Transverse colon (tissue), 4 donors: ENCODE measurements at regions of chr12 and their contacts with region 1.

Region 1: GRCh38 chr12:101830367-101831325 is at the start of gene GNPTAB:
- DNase-seq: peak; percentile 96
- H3K4me3 ChIP-seq: peak within 1 kb of the TSS; percentile 72 to 86 (median 80)
- H3K27ac ChIP-seq: peak within 1 kb of the TSS; percentile 90 to 92 (median 92)
- H3K4me1 ChIP-seq: peaks cover 4 to 37% (median 13%) of the 10 kb centered on the region in 4 donors
- H3K27me3 ChIP-seq: no peaks in the 10 kb centered on the region
- CTCF ChIP-seq: peak; percentile 70 to 85 (median 71)
- EP300 ChIP-seq: no peak
- POLR2A ChIP-seq: no peak
- total RNA-seq, gene GNPTAB: 24.1 to 83.0 (median 64.5) TPM

Region 2: DNA sequence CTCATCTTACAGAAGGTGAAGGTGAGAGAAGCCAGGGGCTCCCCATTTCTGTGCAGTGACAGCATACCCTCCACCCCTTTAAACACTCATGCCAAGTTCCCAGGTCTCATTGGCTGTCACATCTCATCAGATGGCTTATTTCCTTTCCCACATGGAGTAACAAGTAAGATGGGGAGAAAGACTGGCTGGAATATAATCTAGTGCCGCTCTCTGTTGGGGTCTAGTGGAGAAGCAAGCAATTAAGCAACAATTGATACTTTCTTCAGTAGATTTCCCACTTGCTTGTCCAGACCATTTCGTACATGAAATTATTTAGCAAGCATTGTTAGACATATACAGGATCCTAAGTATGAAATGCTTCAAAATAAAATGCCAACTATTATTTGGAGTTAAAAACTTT is 712.8 kb before region 1 on chr12:
- in situ Hi-C with region 1: no loop called
- intact Hi-C with region 1: no loop called
- DNase-seq: no peak
- H3K4me3 ChIP-seq: no peak overlapping the region
- H3K27ac ChIP-seq: no peak overlapping the region
- H3K4me1 ChIP-seq: no peaks in the 10 kb centered on the region
- H3K27me3 ChIP-seq: no peaks in the 10 kb centered on the region
- CTCF ChIP-seq: no peak
- EP300 ChIP-seq: no peak
- POLR2A ChIP-seq: no peak

Region 3: DNA sequence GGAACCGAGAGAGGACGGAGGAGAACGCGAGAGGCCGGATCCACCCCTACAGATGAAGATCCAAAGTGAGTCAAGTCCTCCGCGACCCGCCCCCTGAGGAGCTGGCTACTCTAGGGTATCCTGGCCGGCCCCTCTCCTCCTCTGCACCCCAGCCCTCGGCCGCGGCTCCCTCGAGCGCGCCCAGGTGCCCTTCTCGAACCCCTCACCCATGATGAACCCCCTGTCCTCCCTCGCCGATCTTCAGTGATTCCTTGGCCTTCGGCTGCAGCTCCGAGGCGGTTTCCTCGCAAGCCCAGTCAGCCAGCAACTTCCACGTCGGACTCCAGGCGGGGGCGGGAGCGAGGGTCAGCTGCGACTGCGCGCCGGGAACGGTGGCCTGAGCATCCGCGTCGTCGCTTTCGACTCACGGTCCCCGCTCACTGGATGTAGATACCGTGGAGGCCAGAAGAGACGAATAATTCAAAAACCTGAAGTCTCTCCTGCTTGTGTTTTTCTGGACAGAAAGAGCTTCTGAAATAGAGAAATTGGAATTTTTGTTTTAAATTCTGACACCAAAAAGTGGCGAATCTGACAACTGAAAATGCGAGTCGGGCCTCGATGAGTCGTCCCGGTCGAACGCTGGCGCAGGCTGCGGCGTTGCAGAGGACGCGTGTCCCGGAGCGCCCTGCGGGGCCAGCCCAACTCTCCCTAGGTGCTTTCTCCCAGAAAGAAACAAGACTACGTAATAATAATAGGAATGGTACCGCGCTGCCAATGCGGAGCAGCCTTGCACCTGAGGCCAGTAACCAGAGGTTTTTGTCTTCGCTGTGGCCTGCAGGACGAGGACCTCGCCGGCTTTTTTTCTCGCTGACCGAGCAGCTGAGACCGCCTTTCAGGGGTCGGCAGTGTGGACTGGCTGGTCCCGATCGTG is 423.0 kb before region 1 on chr12 and contains the start of gene ARL1:
- in situ Hi-C with region 1: loop called (anchors 10 to 25 kb)
- intact Hi-C with region 1: no loop called
- DNase-seq: peak; percentile 89
- H3K4me3 ChIP-seq: peak within 1 kb of the TSS; percentile 65 to 95 (median 69)
- H3K27ac ChIP-seq: peak within 1 kb of the TSS; percentile 92 to 98 (median 96)
- H3K4me1 ChIP-seq: peaks cover 7 to 31% (median 23%) of the 10 kb centered on the region in 4 donors
- H3K27me3 ChIP-seq: no peaks in the 10 kb centered on the region
- CTCF ChIP-seq: no peak
- EP300 ChIP-seq: no peak
- POLR2A ChIP-seq: peak; percentile 71
- total RNA-seq, gene ARL1: 5.6 to 76.1 (median 42.1) TPM

Region 4: GRCh38 chr12:101414533-101415119 is 416.0 kb before region 1 on chr12:
- in situ Hi-C with region 1: loop called (anchors 10 to 25 kb)
- intact Hi-C with region 1: no loop called
- DNase-seq: peak; percentile 19
- H3K4me3 ChIP-seq: no peak overlapping the region
- H3K27ac ChIP-seq: no peak overlapping the region
- H3K4me1 ChIP-seq: no peaks in the 10 kb centered on the region
- H3K27me3 ChIP-seq: no peaks in the 10 kb centered on the region
- CTCF ChIP-seq: peak; percentile 48 to 66 (median 53)
- EP300 ChIP-seq: no peak
- POLR2A ChIP-seq: no peak

Region 5: DNA sequence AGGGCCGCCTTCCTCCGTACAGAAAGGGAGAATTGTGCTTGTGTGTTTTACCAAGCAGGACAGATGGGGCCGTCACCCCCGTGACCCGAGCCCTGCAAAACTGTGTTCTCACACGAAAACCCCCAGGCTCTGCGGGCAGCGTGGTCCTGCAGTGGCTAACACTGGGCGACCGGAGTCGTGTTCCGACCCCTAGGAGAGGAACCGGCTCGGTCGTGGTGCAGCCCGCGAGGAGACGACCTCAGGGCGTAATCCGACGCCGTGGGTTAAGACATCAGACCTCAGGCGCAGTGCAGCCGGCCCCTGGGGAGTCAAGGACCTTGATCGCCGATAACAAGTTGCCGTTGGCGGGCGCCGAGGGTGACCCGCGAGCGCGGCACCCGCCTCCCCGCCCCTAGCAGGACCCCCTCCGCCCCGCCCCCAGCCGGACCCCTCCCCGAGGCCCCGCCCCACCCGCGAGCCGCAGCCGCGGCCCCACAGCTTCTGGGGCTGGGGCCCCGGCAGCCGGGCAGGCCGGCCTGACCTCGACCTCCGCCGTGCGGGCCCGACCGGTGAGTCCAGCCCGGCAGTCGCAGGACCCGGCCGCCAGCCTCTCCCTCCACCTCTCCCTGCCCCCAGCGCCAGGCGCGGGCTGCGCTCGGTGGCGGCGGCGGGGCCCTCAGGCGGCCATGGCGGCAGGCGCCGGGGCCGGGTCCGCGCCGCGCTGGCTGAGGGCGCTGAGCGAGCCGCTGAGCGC is 133.3 kb before region 1 on chr12 and contains the start of gene CHPT1:
- in situ Hi-C with region 1: no loop called
- intact Hi-C with region 1: no loop called
- DNase-seq: peak; percentile 83
- H3K4me3 ChIP-seq: peak within 1 kb of the TSS; percentile 76 to 92 (median 81)
- H3K27ac ChIP-seq: peak within 1 kb of the TSS; percentile 94 to 97 (median 96)
- H3K4me1 ChIP-seq: peaks cover 11 to 54% (median 44%) of the 10 kb centered on the region in 4 donors
- H3K27me3 ChIP-seq: no peaks in the 10 kb centered on the region
- CTCF ChIP-seq: no peak
- EP300 ChIP-seq: no peak
- POLR2A ChIP-seq: peak; percentile 59
- total RNA-seq, gene CHPT1: 114 to 215 (median 138) TPM

Region 6: DNA sequence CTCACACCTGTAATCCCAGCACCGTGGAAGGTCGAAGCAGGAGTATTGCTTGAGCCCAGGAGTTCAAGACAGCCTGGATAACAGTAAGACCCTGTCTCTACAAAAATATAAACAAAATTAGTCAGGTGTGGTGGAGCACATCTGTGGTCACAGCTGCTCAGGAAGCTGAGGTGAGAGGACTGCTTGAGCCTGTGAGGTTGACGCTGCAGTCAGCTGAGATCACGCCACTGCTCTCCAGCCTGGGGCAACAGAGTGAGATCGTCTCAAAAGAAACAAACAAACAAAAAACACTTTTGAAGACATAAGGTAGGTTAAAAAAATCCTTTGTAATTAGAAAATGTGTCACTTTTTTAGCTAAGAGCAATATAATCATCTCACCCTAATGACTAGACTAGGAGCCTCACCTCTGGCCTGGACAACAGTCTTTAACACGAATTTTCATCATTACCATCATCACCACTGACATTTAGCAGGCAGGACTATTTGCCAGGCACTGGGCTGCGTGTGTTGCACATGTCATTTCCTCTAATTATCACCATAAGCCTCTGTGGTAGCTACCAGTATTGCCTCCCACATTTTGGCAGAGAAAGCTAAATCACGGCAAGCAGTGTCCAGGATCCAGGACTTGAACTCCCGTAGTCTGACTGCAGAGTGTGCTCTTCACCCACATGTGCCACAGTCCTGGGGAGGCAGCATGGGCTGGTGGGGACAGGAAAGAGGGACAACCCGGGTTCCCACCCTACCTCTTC is 86.7 kb before region 1 on chr12:
- in situ Hi-C with region 1: no loop called
- intact Hi-C with region 1: no loop called
- DNase-seq: peak; percentile 40
- H3K4me3 ChIP-seq: no peak overlapping the region
- H3K27ac ChIP-seq: no peak overlapping the region
- H3K4me1 ChIP-seq: no peaks in the 10 kb centered on the region
- H3K27me3 ChIP-seq: no peaks in the 10 kb centered on the region
- CTCF ChIP-seq: no peak
- EP300 ChIP-seq: no peak
- POLR2A ChIP-seq: no peak

Region 7: DNA sequence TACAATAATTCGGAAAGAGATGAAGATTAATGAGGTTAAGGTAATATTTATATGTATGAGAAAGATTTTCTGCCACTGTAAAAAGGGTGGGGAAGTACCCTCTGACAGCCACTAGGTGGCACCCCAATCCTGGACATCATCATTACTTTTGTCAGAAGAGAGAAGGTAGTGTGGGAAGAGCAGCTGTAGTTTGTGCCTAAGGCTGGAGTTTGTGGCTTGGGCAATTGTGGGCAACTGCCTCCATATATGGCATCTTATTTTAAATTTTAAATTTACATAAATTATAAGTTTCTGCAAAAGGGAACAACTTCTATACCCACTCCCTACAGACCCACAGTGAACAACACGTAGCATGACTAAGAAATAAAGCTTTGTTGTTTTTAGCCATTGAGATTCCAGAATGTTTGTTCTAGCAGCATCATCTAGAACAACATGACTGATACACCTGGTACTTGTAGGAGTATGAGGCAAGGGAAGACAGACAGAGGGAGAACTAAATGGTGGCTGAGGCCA is 56.9 kb before region 1 on chr12:
- in situ Hi-C with region 1: loop called in 3 of 4 experiments (anchors 5 to 10 kb)
- intact Hi-C with region 1: no loop called
- DNase-seq: peak; percentile 69
- H3K4me3 ChIP-seq: no peak overlapping the region
- H3K27ac ChIP-seq: no peak overlapping the region
- H3K4me1 ChIP-seq: peaks cover 0 to 41% (median 0%) of the 10 kb centered on the region in 4 donors
- H3K27me3 ChIP-seq: no peaks in the 10 kb centered on the region
- CTCF ChIP-seq: peak; percentile 93 to 96 (median 95)
- EP300 ChIP-seq: no peak
- POLR2A ChIP-seq: no peak

Region 8: GRCh38 chr12:101792051-101792931 is 38.4 kb before region 1 on chr12:
- in situ Hi-C with region 1: no loop called
- intact Hi-C with region 1: loop called (anchors 5 kb)
- DNase-seq: no peak
- H3K4me3 ChIP-seq: no peak overlapping the region
- H3K27ac ChIP-seq: peak overlapping the region in 2 of 4 donors; percentile 15 to 29
- H3K4me1 ChIP-seq: peaks cover 0 to 27% (median 5%) of the 10 kb centered on the region in 4 donors
- H3K27me3 ChIP-seq: no peaks in the 10 kb centered on the region
- CTCF ChIP-seq: peak; percentile 13 to 32 (median 25)
- EP300 ChIP-seq: no peak
- POLR2A ChIP-seq: no peak

Region 9: DNA sequence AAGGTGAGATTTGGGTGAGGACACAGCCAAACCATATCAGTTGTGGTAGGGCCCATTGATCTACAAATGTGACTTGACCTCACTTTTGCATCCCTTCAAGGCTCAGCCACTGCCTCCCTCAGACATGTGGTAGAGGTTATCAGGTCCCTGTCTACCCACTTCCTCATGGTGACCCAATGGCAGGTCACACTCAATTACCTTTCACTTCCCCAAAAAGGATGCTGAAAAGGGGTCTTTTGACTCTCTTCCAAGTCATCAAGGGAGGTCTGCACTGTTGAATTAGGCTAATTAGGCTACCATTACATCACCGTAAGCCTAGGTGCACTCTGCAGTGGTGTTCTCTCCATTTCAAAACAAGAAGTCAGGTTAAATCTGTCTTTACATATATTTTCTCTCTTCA is 24.1 kb after region 1 on chr12:
- in situ Hi-C with region 1: no loop called
- intact Hi-C with region 1: no loop called
- DNase-seq: no peak
- H3K4me3 ChIP-seq: no peak overlapping the region
- H3K27ac ChIP-seq: no peak overlapping the region
- H3K4me1 ChIP-seq: peaks cover 5 to 17% (median 11%) of the 10 kb centered on the region in 4 donors
- H3K27me3 ChIP-seq: no peaks in the 10 kb centered on the region
- CTCF ChIP-seq: no peak
- EP300 ChIP-seq: no peak
- POLR2A ChIP-seq: no peak

Region 10: GRCh38 chr12:101876861-101877815 is 46.5 kb after region 1 on chr12 and contains the start of gene DRAM1:
- in situ Hi-C with region 1: no loop called
- intact Hi-C with region 1: loop called (anchors 2 kb)
- DNase-seq: peak; percentile 94
- H3K4me3 ChIP-seq: peak within 1 kb of the TSS; percentile 62 to 87 (median 73)
- H3K27ac ChIP-seq: peak within 1 kb of the TSS; percentile 89 to 97 (median 92)
- H3K4me1 ChIP-seq: peaks cover 3 to 14% (median 4%) of the 10 kb centered on the region in 4 donors
- H3K27me3 ChIP-seq: no peaks in the 10 kb centered on the region
- CTCF ChIP-seq: peak in 1 of 5 experiments; percentile 33
- EP300 ChIP-seq: no peak
- POLR2A ChIP-seq: peak; percentile 83
- total RNA-seq, gene DRAM1: 3.7 to 20.1 (median 8.7) TPM